Activated T-helper 1 cell treated with anti-CD3 and anti-CD28 coated beads, Interleukin-12 subunit alpha, Interleukin-12 subunit beta, Interleukin-2, Interleukin-4 antibody, amounts not matched to agents 30 ng/mL and 10 ng/mL and 1 ng/mL, durations not matched to agents 14 hours and 24 hours and 36 hours (primary cell): ENCODE measurements at regions of chr6 and their contacts with region 1.

Region 1: DNA sequence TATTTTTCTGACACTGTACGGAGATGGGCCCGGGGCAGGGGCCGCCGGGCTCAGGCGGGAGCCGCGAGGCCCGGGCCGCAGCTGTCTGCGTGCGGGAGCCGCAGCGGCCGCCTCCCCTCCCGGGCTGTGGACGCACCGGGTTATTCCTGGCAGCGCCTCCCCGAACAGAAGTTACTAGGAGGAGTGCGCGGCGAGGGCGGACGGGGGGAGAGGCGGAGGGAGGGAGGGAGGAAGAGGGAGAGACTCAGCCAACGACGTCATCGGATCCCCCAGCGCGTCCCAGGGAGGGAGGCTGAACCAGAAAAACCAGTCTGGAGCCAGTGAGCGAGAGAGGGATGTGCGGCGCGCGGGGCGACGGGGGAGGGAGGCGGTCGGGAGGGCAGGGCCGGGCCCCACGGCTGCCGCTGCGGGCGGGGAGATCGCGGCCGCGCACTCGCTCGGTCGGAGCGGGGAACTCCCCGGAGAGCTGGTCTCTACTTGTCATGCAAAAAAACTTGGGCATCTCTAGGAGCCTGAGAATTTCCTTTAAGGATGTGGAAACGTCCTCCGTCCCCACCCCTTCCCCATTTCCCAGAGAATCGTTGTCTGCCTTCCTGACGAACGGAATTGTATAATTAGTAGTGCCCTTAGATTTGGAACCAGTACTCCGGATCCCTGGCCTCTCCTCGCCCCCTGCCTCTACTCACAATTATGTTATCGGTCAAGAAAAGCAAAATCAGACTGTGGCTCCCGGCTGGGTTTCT is 1.4 kb upstream of the HIVEP2 start:
- DNase-seq: peak; percentile 81
- H3K4me3 Mint-ChIP-seq: peak overlapping the region; percentile 92
- H3K27ac Mint-ChIP-seq: peak overlapping the region; percentile 97
- H3K4me1 Mint-ChIP-seq: peaks cover 43% of the 10 kb centered on the region
- H3K27me3 Mint-ChIP-seq: peaks cover 6% of the 10 kb centered on the region

Region 2: GRCh38 chr6:142566628-142567396 is 379.5 kb before region 1 on chr6:
- intact Hi-C with region 1: loop called (anchors 1 kb)
- DNase-seq: peak; percentile 38
- H3K4me3 Mint-ChIP-seq: no peak overlapping the region
- H3K27ac Mint-ChIP-seq: no peak overlapping the region
- H3K4me1 Mint-ChIP-seq: peaks cover 48% of the 10 kb centered on the region
- H3K27me3 Mint-ChIP-seq: no peaks in the 10 kb centered on the region

Region 3: DNA sequence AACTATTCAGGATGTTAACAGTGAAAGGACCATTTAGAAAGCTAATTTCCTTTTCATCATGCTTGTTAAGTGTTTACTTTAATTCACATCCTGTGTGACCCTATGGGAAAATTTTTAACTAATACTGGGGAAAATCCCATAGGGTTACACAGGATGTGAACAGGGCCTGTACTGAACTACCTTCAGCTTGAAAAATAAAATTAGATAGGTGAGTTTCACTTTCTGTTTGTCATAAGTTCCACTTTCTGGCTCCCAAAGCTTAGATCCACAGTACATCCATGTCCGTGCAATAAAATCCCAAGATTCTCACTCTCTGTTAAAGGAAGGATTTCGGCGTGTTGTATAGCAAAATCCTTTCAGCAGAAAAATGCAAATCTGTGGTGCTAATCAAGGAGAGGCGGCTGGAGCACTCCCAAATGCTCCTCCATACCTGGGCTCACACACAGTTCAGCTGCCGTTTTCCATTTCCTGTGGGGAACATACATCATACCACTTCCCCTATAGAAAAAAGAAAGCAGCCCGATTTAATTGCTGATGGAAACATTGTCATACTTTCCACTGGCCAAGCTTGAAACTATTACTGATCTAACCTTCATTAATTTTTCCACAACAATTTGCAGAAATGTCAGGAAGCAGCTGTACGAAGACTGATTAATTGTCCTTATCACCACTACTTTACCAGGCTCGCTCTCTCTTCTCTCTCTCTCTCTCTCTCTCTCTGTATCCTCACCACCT is 126.6 kb before region 1 on chr6:
- intact Hi-C with region 1: loop called (anchors 1 kb)
- DNase-seq: peak; percentile 50
- H3K4me3 Mint-ChIP-seq: peak overlapping the region; percentile 85
- H3K27ac Mint-ChIP-seq: peak overlapping the region; percentile 98
- H3K4me1 Mint-ChIP-seq: peaks cover 75% of the 10 kb centered on the region
- H3K27me3 Mint-ChIP-seq: peaks cover 3% of the 10 kb centered on the region

Region 4: GRCh38 chr6:142893075-142893474 is 53.3 kb before region 1 on chr6:
- intact Hi-C with region 1: no loop called
- DNase-seq: no peak
- H3K4me3 Mint-ChIP-seq: no peak overlapping the region
- H3K27ac Mint-ChIP-seq: no peak overlapping the region
- H3K4me1 Mint-ChIP-seq: peaks cover 36% of the 10 kb centered on the region
- H3K27me3 Mint-ChIP-seq: no peaks in the 10 kb centered on the region

Region 5: DNA sequence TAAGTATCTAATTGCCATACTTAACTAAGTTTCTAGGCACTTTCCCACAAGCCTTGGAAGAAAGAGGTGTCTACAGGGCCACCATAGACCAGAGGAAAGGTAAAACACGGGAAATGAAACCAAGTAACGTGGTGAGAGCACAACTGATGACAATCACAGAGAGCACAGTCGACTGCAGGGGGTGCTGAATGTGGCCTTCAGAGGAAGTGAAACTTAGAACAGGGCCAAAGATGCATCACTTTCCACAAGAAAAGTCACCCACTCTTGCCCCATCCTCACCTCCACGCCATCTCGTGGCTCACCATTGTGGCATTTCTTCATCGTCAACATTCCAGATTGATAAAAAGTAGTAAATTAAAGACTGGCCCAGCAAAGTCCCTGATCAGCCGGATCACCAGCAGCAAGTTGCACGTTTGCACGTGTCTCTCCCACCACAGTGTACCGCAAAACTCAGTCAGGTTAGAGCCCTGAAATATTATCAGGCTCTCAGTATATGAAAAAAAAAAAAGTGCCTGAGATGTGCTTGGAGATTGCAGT is 32.8 kb before region 1 on chr6:
- intact Hi-C with region 1: loop called (anchors 1 kb)
- DNase-seq: peak; percentile 73
- H3K4me3 Mint-ChIP-seq: peak overlapping the region; percentile 64
- H3K27ac Mint-ChIP-seq: peak overlapping the region; percentile 92
- H3K4me1 Mint-ChIP-seq: peaks cover 63% of the 10 kb centered on the region
- H3K27me3 Mint-ChIP-seq: no peaks in the 10 kb centered on the region

Region 6: DNA sequence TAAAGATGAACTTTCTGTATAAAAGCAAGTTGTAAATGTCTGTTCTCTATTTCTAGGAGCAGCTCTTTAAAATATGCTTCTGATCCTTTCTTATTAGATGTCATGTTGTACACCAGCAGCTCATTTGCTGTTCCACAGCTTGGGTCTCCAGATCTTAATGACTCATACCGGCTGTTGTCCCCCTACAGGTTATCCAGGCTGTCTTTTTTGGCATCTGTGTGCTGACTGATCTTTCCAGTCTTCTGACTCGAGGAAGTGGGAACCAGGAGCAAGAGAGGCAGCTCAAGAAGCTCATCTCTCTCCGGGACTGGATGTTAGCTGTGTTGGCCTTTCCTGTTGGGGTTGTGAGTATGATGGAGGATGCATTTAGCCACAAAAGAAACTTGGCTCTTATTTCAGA is 190.3 kb after region 1 on chr6:
- intact Hi-C with region 1: loop called (anchors 5 kb)
- DNase-seq: no peak
- H3K4me3 Mint-ChIP-seq: no peak overlapping the region
- H3K27ac Mint-ChIP-seq: peak overlapping the region; percentile 70
- H3K4me1 Mint-ChIP-seq: peaks cover 30% of the 10 kb centered on the region
- H3K27me3 Mint-ChIP-seq: no peaks in the 10 kb centered on the region

Region 7: GRCh38 chr6:143806282-143807102 is 860.1 kb after region 1 on chr6:
- intact Hi-C with region 1: loop called (anchors 5 kb)
- DNase-seq: peak; percentile 48
- H3K4me3 Mint-ChIP-seq: peak overlapping the region; percentile 56
- H3K27ac Mint-ChIP-seq: peak overlapping the region; percentile 94
- H3K4me1 Mint-ChIP-seq: peaks cover 55% of the 10 kb centered on the region
- H3K27me3 Mint-ChIP-seq: peaks cover 3% of the 10 kb centered on the region